ENCODE measurements at regions of chr6 and their contacts with region 1.

Region 1: GRCh38 chr6:2634139-2634964 is 116.4 kb downstream of the MYLK4 start:
- DNase-seq: peak; percentile 83
- ATAC-seq: peak; percentile 97
- H3K4me3 Mint-ChIP-seq: peak overlapping the region; percentile 44
- H3K27ac Mint-ChIP-seq: no peak overlapping the region
- H3K4me1 Mint-ChIP-seq: peaks cover 2% of the 10 kb centered on the region
- H3K27me3 Mint-ChIP-seq: peaks cover 40% of the 10 kb centered on the region

Region 2: DNA sequence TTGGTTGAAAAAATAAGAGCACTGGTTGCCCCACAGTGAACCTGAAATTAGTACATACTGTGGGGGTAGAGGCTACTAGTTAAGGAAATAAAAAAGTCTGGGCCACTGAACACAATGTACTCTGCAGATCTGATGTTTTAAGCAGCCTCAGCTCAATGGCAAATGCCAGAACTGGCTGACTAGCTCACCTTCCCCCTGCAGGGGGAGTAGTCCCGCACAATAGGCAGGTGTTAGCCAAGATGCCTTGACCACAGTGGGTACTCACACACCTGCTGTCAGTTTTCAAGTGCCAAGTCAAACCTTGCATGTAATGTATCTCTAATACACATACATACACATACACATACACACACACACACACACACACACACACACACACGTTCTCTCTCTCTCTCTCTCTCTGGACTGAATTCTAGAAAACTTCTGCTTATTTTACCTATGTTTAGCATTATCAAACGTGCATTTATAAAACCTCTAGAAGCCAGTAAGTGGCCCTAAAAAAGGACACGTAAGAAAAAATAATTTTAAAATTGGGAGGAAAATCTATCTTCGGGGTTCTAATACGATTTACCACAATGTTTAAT is 425.0 kb before region 1 on chr6:
- CTCF ChIA-PET with region 1: interaction called, 16 read pairs
- DNase-seq: peak; percentile 59
- ATAC-seq: peak; percentile 55
- H3K4me3 Mint-ChIP-seq: no peak overlapping the region
- H3K27ac Mint-ChIP-seq: no peak overlapping the region
- H3K4me1 Mint-ChIP-seq: no peaks in the 10 kb centered on the region
- H3K27me3 Mint-ChIP-seq: peaks cover 7% of the 10 kb centered on the region

Region 3: GRCh38 chr6:2448820-2449571 is 185.4 kb before region 1 on chr6:
- CTCF ChIA-PET with region 1: interaction called, 29 read pairs
- DNase-seq: peak; percentile 57
- ATAC-seq: no peak
- H3K4me3 Mint-ChIP-seq: peak overlapping the region; percentile 44
- H3K27ac Mint-ChIP-seq: peak overlapping the region; percentile 5
- H3K4me1 Mint-ChIP-seq: peaks cover 6% of the 10 kb centered on the region
- H3K27me3 Mint-ChIP-seq: peaks cover 15% of the 10 kb centered on the region

Region 4: GRCh38 chr6:2542858-2543218 is 91.5 kb before region 1 on chr6:
- CTCF ChIA-PET with region 1: interaction called, 15 read pairs
- DNase-seq: peak; percentile 88
- ATAC-seq: peak; percentile 87
- H3K4me3 Mint-ChIP-seq: peak overlapping the region; percentile 32
- H3K27ac Mint-ChIP-seq: peak overlapping the region; percentile 74
- H3K4me1 Mint-ChIP-seq: peaks cover 23% of the 10 kb centered on the region
- H3K27me3 Mint-ChIP-seq: peaks cover 82% of the 10 kb centered on the region

Region 5: GRCh38 chr6:2651961-2652360 is 17.6 kb after region 1 on chr6:
- CTCF ChIA-PET with region 1: interaction called, 27 read pairs
- DNase-seq: no peak
- ATAC-seq: no peak
- H3K4me3 Mint-ChIP-seq: no peak overlapping the region
- H3K27ac Mint-ChIP-seq: no peak overlapping the region
- H3K4me1 Mint-ChIP-seq: no peaks in the 10 kb centered on the region
- H3K27me3 Mint-ChIP-seq: peaks cover 51% of the 10 kb centered on the region

Region 6: GRCh38 chr6:2718334-2719092 is 84.2 kb after region 1 on chr6:
- CTCF ChIA-PET with region 1: no interaction called
- DNase-seq: no peak
- ATAC-seq: no peak
- H3K4me3 Mint-ChIP-seq: no peak overlapping the region
- H3K27ac Mint-ChIP-seq: no peak overlapping the region
- H3K4me1 Mint-ChIP-seq: no peaks in the 10 kb centered on the region
- H3K27me3 Mint-ChIP-seq: peaks cover 7% of the 10 kb centered on the region

Measured in activated CD8-positive, alpha-beta memory T cell treated with anti-CD3 and anti-CD28 coated beads, Interleukin-2, amount 10 ng/mL, durations not matched to agents 7 days and 5 days (primary cell).